PC-3 (cell line): ENCODE measurements at regions of chr2 and their contacts with region 1.

Region 1: DNA sequence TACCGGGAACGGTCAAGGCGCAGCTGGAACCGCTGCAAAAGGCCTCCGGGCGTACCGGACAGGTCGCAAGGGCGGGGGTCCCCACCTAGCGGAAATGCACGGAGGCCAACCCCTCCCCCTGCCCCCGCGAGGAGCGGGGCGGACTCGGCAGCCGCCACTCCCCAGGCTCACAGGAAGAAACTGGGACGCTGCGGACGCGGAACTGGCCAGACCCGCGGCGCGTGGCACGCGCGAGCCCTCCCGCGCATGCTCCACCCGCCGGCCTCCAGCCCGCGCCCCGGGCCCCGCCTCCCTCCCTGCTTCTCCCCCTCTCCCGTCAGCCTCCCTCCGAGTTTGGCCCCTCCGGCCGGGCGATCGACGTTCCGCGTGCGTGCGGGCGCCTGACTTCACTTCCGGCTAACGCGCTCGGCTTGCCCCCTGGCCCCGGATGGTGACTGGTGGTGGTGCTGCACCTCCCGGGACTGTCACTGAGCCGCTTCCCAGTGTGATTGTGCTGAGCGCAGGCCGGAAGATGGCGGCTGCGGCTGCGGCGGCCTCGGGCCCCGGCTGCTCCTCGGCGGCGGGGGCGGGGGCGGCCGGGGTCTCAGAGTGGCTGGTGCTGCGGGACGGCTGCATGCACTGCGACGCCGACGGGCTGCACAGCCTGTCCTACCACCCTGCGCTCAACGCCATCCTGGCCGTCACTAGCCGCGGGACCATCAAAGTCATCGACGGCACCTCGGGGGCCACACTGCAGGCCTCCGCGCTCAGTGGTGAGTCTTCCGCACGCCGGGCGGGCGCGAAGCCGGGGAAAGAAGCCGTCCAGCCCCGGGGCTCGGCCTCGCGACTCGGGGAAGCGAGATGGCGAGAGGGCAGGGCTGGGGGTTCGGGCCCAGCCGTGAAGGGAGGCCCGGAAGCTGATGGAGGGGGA is at the start of gene BIRC6:
- DNase-seq: peak; percentile 97
- ATAC-seq: peak; percentile 86
- H3K4me3 ChIP-seq: peak within 1 kb of the TSS; percentile 96
- H3K27ac ChIP-seq: peak within 1 kb of the TSS; percentile 57
- H3K4me1 ChIP-seq: peaks cover 21% of the 10 kb centered on the region
- H3K27me3 ChIP-seq: no peaks in the 10 kb centered on the region
- CTCF ChIP-seq: no peak
- total RNA-seq, gene BIRC6: 74.7 and 116 TPM in 2 replicates

Region 2: GRCh38 chr2:32168513-32168912 is 188.5 kb before region 1 on chr2:
- CTCF ChIA-PET with region 1: no interaction called
- POLR2A ChIA-PET with region 1: interaction called, 4 read pairs
- intact Hi-C with region 1: loop called (anchors 5 kb)
- DNase-seq: no peak
- ATAC-seq: no peak
- H3K4me3 ChIP-seq: no peak overlapping the region
- H3K27ac ChIP-seq: no peak overlapping the region
- H3K4me1 ChIP-seq: peaks cover 6% of the 10 kb centered on the region; the same call in 1 of the 2 replicates
- H3K27me3 ChIP-seq: no peaks in the 10 kb centered on the region
- CTCF ChIP-seq: no peak

Region 3: GRCh38 chr2:32289165-32289999 is 67.6 kb before region 1 on chr2:
- CTCF ChIA-PET with region 1: no interaction called
- POLR2A ChIA-PET with region 1: interaction called, 4 read pairs
- intact Hi-C with region 1: loop called (anchors 5 kb)
- DNase-seq: peak; percentile 79
- ATAC-seq: peak; percentile 88
- H3K4me3 ChIP-seq: no peak overlapping the region
- H3K27ac ChIP-seq: peak overlapping the region; percentile 52
- H3K4me1 ChIP-seq: peaks cover 20% of the 10 kb centered on the region
- H3K27me3 ChIP-seq: no peaks in the 10 kb centered on the region
- CTCF ChIP-seq: no peak

Region 4: GRCh38 chr2:32342801-32343200 is 14.2 kb before region 1 on chr2:
- CTCF ChIA-PET with region 1: no interaction called
- POLR2A ChIA-PET with region 1: no interaction called
- intact Hi-C with region 1: loop called (anchors 1 kb)
- DNase-seq: peak; percentile 29
- ATAC-seq: no peak
- H3K4me3 ChIP-seq: no peak overlapping the region
- H3K27ac ChIP-seq: no peak overlapping the region
- H3K4me1 ChIP-seq: peaks cover 6% of the 10 kb centered on the region; the same call in 1 of the 2 replicates
- H3K27me3 ChIP-seq: no peaks in the 10 kb centered on the region
- CTCF ChIP-seq: no peak

Region 5: DNA sequence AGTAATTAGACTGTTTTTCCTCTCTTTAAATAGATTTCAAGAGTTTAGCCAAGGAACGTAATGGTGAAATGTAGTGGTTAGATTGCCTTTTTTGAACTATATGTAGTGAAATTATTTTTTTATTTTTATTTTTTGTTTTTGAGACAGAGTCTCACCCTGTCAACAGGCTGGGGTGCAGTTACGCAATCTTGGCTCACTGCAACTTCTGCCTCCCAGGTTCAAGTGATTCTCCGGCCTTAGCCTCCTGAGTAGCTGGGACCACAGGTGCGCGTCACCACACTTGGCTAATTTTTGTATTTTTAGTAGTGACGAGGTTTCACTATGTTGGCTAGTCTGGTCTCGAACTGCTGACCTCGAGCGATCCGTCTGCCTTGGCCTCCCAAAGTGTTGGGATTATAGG is 60.7 kb after region 1 on chr2:
- CTCF ChIA-PET with region 1: no interaction called
- POLR2A ChIA-PET with region 1: interaction called, 13 read pairs
- intact Hi-C with region 1: no loop called
- DNase-seq: no peak
- ATAC-seq: no peak
- H3K4me3 ChIP-seq: no peak overlapping the region
- H3K27ac ChIP-seq: no peak overlapping the region
- H3K4me1 ChIP-seq: peaks cover 4% of the 10 kb centered on the region; the same call in 1 of the 2 replicates
- H3K27me3 ChIP-seq: no peaks in the 10 kb centered on the region
- CTCF ChIP-seq: no peak

Region 6: DNA sequence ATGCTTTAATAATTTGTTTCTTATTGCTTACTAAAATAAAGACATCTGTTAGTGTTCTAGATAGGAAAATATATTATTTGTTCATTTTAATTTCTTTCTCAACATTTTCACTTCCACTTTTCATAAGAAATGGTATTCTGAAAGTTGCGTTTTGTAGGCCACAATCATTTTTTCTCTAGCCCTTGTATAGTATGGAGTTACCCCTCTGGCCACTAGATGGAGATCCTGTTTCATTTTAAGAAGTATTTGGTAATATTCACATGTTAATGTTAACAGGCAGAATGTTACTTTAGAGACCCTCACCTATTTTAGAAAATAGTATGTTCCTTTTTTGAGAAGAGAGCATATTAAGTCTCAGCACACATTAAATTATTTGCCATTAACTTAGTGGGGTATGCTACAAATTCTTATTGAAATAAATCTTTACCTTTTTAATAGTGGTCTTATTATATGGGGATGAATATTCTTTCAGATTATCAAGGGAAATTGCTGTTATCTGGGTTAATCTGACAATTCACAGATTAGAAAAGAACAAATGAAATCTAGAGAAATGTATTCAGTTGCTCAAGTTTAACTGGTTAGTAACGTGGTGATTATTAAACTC is 196.9 kb after region 1 on chr2:
- CTCF ChIA-PET with region 1: no interaction called
- POLR2A ChIA-PET with region 1: no interaction called
- intact Hi-C with region 1: no loop called
- DNase-seq: peak; percentile 54
- ATAC-seq: peak; percentile 77
- H3K4me3 ChIP-seq: no peak overlapping the region
- H3K27ac ChIP-seq: no peak overlapping the region
- H3K4me1 ChIP-seq: no peaks in the 10 kb centered on the region
- H3K27me3 ChIP-seq: no peaks in the 10 kb centered on the region
- CTCF ChIP-seq: peak; percentile 83

Region 7: DNA sequence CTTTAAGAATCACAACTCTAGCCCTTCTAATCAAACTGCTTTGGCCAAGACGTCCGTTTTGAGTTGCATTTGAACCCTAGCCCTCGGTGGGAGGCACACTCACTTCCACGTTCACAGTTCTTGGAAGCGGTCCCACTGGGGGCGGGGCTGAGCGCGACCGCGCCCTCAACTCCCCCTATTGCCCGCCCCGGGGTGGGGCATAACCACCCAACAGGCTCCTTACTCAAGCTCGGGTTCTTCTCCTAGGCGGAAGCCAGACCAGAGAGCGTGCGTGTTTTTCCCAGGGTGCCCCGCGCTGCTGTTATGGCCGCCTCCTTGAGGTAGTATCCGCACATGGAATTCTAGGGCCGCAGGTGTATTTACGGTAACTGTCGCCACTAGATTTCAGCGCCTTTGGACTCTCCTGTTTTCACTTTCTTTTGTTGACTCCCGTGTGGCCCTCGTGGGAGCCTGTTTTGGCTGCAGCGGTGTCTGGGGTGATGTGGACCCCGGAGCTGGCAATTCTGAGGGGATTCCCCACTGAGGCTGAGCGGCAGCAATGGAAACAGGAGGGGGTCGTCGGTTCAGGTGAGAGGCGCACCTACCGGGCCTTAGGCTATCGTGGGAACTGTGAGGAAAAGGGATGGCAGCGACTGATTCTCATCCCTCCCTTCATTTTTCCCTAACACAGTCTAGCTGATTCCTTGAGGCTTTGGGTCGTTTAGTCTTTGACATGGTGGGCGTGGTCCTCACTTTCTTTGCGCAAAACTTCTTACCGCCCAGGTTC is 271.0 kb after region 1 on chr2 and contains the start of gene TTC27:
- CTCF ChIA-PET with region 1: no interaction called
- POLR2A ChIA-PET with region 1: no interaction called
- intact Hi-C with region 1: no loop called
- DNase-seq: peak; percentile 96
- ATAC-seq: peak; percentile 98
- H3K4me3 ChIP-seq: peak within 1 kb of the TSS; percentile 100
- H3K27ac ChIP-seq: peak within 1 kb of the TSS; percentile 49
- H3K4me1 ChIP-seq: peaks cover 24% of the 10 kb centered on the region
- H3K27me3 ChIP-seq: no peaks in the 10 kb centered on the region
- CTCF ChIP-seq: no peak
- total RNA-seq, gene TTC27: 33.0 and 33.5 TPM in 2 replicates